Activated CD4-positive, alpha-beta memory T cell treated with anti-CD3 and anti-CD28 coated beads, Interleukin-2, amount 10 ng/mL, durations not matched to agents 7 days and 5 days (primary cell): ENCODE measurements at regions of chrX and their contacts with region 1.

Region 1: DNA sequence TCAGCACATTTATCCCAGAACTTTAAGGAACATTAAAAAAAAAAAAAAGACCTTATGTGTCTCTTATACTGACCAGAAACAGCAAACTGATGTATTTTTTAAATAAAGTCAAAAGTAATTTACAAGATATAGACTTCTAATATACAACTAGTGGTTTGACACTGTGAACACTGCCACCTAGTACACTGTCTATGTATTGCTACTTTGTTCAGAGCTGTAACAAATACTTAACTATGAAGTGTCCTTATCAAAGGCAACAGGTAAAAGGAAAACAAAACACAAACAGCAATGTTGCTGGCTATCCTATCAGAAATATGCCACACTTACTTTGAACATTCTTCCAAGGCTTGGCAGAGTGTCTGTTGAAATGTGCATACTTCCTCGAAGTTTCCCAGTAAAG is 60.4 kb downstream of the CD40LG start:
- DNase-seq: no peak
- H3K4me3 Mint-ChIP-seq: no peak overlapping the region
- H3K27ac Mint-ChIP-seq: no peak overlapping the region
- H3K4me1 Mint-ChIP-seq: peaks cover 33% of the 10 kb centered on the region
- H3K27me3 Mint-ChIP-seq: no peaks in the 10 kb centered on the region

Region 2: DNA sequence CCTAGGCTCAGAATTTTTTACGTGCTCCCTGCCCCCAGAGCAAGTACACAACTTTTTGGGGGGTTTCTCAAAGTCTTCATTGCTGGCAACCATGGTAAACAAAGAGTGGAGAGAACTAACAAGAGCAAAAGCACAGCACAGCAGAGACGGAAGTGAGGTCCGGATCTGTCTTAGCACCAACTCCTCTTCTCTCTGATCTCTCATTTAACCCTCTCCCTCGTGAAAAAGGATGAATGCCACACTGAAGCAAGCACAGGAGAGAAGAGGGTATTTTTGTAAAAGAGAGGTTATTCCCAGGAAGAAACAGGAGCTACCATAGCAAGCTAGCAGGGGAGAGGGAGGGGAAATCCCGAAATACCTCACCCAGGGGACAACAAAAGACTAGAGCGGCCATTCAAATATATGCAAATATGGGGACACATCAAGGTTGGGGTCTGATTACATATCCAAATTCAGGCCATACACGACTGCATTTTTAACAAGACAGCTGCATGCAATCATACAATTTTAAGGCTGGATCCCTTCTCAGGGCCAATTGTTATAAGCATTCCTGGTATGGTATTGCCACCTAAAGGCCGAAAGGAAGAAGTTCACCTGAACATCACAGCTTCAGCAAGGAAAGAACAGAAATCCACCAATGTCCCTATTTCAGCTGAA is 13.8 kb before region 1 on chrX:
- CTCF ChIA-PET with region 1: interaction called, 23 read pairs
- POLR2A ChIA-PET with region 1: no interaction called
- DNase-seq: peak; percentile 28
- H3K4me3 Mint-ChIP-seq: peak overlapping the region; percentile 71
- H3K27ac Mint-ChIP-seq: peak overlapping the region; percentile 98
- H3K4me1 Mint-ChIP-seq: peaks cover 82% of the 10 kb centered on the region
- H3K27me3 Mint-ChIP-seq: no peaks in the 10 kb centered on the region

Region 3: GRCh38 chrX:136736325-136737089 is 28.2 kb after region 1 on chrX:
- CTCF ChIA-PET with region 1: no interaction called
- POLR2A ChIA-PET with region 1: no interaction called
- DNase-seq: no peak
- H3K4me3 Mint-ChIP-seq: no peak overlapping the region
- H3K27ac Mint-ChIP-seq: no peak overlapping the region
- H3K4me1 Mint-ChIP-seq: peaks cover 27% of the 10 kb centered on the region
- H3K27me3 Mint-ChIP-seq: no peaks in the 10 kb centered on the region

Region 4: DNA sequence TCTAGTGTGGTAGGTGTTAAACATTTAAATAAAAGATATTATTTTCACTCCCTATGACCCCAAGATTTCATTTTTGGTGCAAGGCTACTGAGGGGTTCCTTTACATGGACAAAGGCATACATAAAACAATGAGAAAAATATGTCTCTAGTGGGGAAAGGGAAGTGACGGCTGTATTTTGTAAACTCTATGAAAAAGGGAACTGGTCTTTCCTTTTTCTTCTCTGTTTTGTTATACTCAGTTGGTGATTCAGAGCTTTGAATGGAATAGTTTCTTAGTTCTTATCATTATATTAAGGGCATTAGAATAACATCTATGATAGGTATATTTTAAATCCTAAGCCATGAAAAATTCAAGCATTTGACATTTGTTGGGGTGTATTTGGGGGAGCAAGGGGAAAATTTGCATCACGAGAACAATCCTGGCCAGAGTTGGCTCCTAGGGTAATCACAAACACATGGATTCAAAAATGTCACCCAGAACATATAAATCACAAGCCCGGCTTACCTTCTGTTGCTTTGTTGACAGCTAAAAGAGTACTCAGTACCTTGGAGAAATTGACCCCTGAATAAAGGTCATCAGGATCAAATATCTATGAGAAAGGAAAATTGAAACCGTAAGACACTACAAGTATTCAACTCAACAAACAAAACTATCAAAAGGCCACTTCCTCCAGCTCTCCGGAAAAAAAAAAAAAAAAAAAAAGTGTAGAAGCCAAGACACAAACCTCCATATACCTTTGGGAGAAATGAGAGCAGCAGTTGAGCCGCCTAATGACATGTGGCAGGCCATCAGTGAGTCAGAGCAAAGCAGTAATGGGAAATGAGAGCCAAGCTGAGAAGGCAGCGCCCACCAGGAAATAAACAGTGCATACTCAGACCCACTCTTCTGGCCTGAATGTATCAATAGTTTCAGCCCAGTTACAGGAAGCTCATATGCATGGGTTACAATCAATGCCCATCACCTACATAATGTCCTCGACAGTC is 38.9 kb after region 1 on chrX:
- CTCF ChIA-PET with region 1: no interaction called
- POLR2A ChIA-PET with region 1: no interaction called
- DNase-seq: peak; percentile 26
- H3K4me3 Mint-ChIP-seq: no peak overlapping the region
- H3K27ac Mint-ChIP-seq: peak overlapping the region; percentile 70
- H3K4me1 Mint-ChIP-seq: peaks cover 86% of the 10 kb centered on the region
- H3K27me3 Mint-ChIP-seq: no peaks in the 10 kb centered on the region